CD8-positive, alpha-beta T cell (primary cell): ENCODE measurements at regions of chr16 and their contacts with region 1.

Region 1: DNA sequence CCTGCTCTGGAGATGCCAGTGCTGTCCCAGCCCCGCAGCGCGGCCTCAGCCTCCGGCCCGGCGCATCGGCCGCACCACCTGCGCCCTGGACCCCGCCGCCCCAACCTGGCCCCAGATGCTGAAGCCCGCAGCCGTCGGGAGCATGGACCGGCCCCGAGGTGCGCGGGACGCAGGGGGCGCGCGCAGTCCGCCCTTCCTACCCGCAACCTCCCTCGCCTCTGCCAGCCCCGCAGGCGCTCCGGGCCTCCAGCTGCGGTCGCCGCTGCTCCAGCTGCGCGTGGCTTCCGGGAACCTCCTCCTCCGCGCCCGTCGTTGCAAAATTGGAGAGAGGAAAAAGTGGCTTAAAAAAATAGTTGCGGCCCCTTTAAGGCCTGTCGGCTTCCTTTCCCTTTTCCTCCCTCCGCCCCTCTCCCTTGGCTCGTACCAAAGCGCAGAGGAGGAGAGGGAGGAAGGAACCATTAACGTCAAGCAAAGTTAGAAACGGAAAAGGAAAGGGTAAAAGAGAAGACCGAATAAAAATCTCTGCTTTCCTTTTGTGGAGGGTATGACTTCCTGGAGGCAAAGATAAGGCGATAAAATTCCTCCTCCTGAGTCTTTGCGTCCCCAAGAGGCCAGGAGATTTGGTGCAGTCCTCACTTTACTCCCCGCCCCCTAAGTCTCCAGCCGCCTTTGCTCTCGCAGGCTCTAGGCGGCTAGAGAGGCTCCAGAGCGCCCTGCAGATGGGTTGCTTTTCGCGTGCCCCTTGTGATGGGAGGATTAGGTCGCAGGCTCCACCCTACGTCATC is at the start of gene CDIPT:
- DNase-seq: peak; percentile 87 to 98 (median 93)
- ATAC-seq: peak; percentile 97
- H3K4me3 ChIP-seq: peak within 1 kb of the TSS; percentile 81 to 96
- H3K4me3 Mint-ChIP-seq: peak within 1 kb of the TSS; percentile 94
- H3K27ac ChIP-seq: peak within 1 kb of the TSS; percentile 90 to 99
- H3K27ac Mint-ChIP-seq: peak within 1 kb of the TSS; percentile 100
- H3K4me1 ChIP-seq: peaks cover 19% of the 10 kb centered on the region
- H3K4me1 Mint-ChIP-seq: peaks cover 28% of the 10 kb centered on the region
- H3K27me3 ChIP-seq: no peaks in the 10 kb centered on the region
- H3K27me3 Mint-ChIP-seq: no peaks in the 10 kb centered on the region
- CTCF ChIP-seq: peak; percentile 42
- total RNA-seq, gene CDIPT: 24.5 to 26.4 TPM

Region 2: GRCh38 chr16:29790183-29790952 is 72.7 kb before region 1 on chr16 and contains the start of gene KIF22:
- CTCF ChIA-PET with region 1: interaction called, 3 read pairs
- POLR2A ChIA-PET with region 1: no interaction called
- intact Hi-C with region 1: loop called (anchors 1 kb)
- DNase-seq: peak; percentile 99 to 100 (median 100)
- ATAC-seq: peak; percentile 95
- H3K4me3 ChIP-seq: peak within 1 kb of the TSS; percentile 81 to 94
- H3K4me3 Mint-ChIP-seq: peak within 1 kb of the TSS; percentile 99
- H3K27ac ChIP-seq: peak within 1 kb of the TSS; percentile 78 to 80
- H3K27ac Mint-ChIP-seq: peak within 1 kb of the TSS; percentile 95
- H3K4me1 ChIP-seq: peaks cover 30% of the 10 kb centered on the region
- H3K4me1 Mint-ChIP-seq: peaks cover 41% of the 10 kb centered on the region
- H3K27me3 ChIP-seq: no peaks in the 10 kb centered on the region
- H3K27me3 Mint-ChIP-seq: no peaks in the 10 kb centered on the region
- CTCF ChIP-seq: peak; percentile 67
- total RNA-seq, gene KIF22: 93.5 to 105 TPM

Region 3: GRCh38 chr16:29815793-29816693 is 47.0 kb before region 1 on chr16 and contains the start of gene PAGR1:
- CTCF ChIA-PET with region 1: interaction called, 3 read pairs
- POLR2A ChIA-PET with region 1: interaction called, 5 read pairs
- intact Hi-C with region 1: loop called (anchors 1 kb)
- DNase-seq: peak; percentile 97 to 100 (median 98)
- ATAC-seq: peak; percentile 77
- H3K4me3 ChIP-seq: peak within 1 kb of the TSS; percentile 74 to 90
- H3K4me3 Mint-ChIP-seq: peak within 1 kb of the TSS; percentile 98
- H3K27ac ChIP-seq: peak within 1 kb of the TSS; percentile 80 to 86
- H3K27ac Mint-ChIP-seq: peak within 1 kb of the TSS; percentile 98
- H3K4me1 ChIP-seq: peaks cover 59% of the 10 kb centered on the region
- H3K4me1 Mint-ChIP-seq: peaks cover 62% of the 10 kb centered on the region
- H3K27me3 ChIP-seq: no peaks in the 10 kb centered on the region
- H3K27me3 Mint-ChIP-seq: no peaks in the 10 kb centered on the region
- CTCF ChIP-seq: peak; percentile 92
- total RNA-seq, gene PAGR1: 13.8 to 16.8 TPM

Region 4: GRCh38 chr16:29900102-29900887 is 37.2 kb after region 1 on chr16 and contains the start of gene ASPHD1:
- CTCF ChIA-PET with region 1: no interaction called
- POLR2A ChIA-PET with region 1: no interaction called
- intact Hi-C with region 1: loop called in 1 of 2 experiments (anchors 1 kb)
- DNase-seq: peak in 5 of 9 experiments; percentile 68 to 85 (median 80)
- ATAC-seq: peak; percentile 87
- H3K4me3 ChIP-seq: peak within 1 kb of the TSS; percentile 40 to 58
- H3K4me3 Mint-ChIP-seq: peak within 1 kb of the TSS; percentile 73
- H3K27ac ChIP-seq: no peak within 1 kb of the TSS
- H3K27ac Mint-ChIP-seq: no peak within 1 kb of the TSS
- H3K4me1 ChIP-seq: peaks cover 13% of the 10 kb centered on the region
- H3K4me1 Mint-ChIP-seq: peaks cover 8% of the 10 kb centered on the region
- H3K27me3 ChIP-seq: peaks cover 8 to 36% of the 10 kb centered on the region in 2 experiments
- H3K27me3 Mint-ChIP-seq: peaks cover 23% of the 10 kb centered on the region
- CTCF ChIP-seq: no peak
- total RNA-seq, gene ASPHD1: not detected

Region 5: DNA sequence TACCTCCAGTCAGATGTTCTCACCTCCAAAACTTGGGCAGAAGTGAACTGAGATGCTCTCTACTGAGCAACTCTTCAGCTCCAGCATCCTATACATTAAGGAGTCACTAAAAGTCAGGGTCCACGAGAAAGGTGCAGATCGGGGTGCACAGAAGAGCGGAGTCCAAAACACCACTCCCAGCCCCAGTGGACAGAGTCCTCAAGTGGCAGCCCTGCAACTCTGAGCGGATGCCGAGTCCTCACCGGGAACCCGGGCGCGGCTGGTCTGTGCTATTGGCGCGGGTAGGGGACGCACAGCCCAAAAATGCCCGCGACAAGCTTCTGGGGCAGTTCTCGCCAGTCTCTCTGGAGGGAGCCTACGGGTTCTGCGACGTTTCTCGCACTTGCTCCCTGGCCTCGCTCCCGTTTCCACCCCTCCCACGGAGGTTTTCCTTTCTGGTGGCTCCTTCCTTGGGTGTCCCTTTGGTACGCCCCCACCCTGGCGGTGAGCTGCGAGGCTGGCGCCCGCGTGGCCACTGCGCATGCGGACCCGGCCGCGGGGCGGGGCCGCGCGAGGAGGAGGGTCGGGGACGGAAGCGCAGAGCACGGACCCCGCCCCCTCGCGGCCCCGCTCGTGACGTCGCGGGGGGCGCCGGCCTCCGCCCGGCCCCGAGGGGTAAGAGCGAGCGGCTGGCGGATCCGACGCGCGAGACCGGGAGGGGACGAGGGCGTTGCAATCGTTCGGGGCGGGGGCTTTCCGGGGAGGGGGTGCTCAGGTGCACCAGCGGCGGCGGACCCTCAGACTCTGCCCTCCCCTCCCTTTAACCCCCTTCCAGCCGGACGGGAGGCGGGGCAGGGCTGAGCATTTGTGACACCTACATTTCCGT is 98.6 kb after region 1 on chr16 and contains the start of gene TMEM219:
- CTCF ChIA-PET with region 1: no interaction called
- POLR2A ChIA-PET with region 1: no interaction called
- intact Hi-C with region 1: loop called in 1 of 2 experiments (anchors 1 kb)
- DNase-seq: peak; percentile 87 to 98 (median 95)
- ATAC-seq: peak; percentile 90
- H3K4me3 ChIP-seq: peak within 1 kb of the TSS; percentile 77 to 90
- H3K4me3 Mint-ChIP-seq: peak within 1 kb of the TSS; percentile 89
- H3K27ac ChIP-seq: peak within 1 kb of the TSS; percentile 75 to 88
- H3K27ac Mint-ChIP-seq: peak within 1 kb of the TSS; percentile 95
- H3K4me1 ChIP-seq: peaks cover 19% of the 10 kb centered on the region
- H3K4me1 Mint-ChIP-seq: peaks cover 26% of the 10 kb centered on the region
- H3K27me3 ChIP-seq: no peaks in the 10 kb centered on the region
- H3K27me3 Mint-ChIP-seq: no peaks in the 10 kb centered on the region
- CTCF ChIP-seq: no peak
- total RNA-seq, gene TMEM219: 41.5 to 50.2 TPM

Region 6: GRCh38 chr16:29995911-29996772 is 133.1 kb after region 1 on chr16 and contains the start of gene INO80E:
- CTCF ChIA-PET with region 1: no interaction called
- POLR2A ChIA-PET with region 1: no interaction called
- intact Hi-C with region 1: loop called (anchors 1 kb)
- DNase-seq: peak; percentile 98 to 100 (median 99)
- ATAC-seq: peak; percentile 96
- H3K4me3 ChIP-seq: peak within 1 kb of the TSS; percentile 93 to 100
- H3K4me3 Mint-ChIP-seq: peak within 1 kb of the TSS; percentile 94
- H3K27ac ChIP-seq: peak within 1 kb of the TSS; percentile 99
- H3K27ac Mint-ChIP-seq: peak within 1 kb of the TSS; percentile 97
- H3K4me1 ChIP-seq: peaks cover 14% of the 10 kb centered on the region
- H3K4me1 Mint-ChIP-seq: peaks cover 39% of the 10 kb centered on the region
- H3K27me3 ChIP-seq: no peaks in the 10 kb centered on the region
- H3K27me3 Mint-ChIP-seq: no peaks in the 10 kb centered on the region
- CTCF ChIP-seq: no peak
- total RNA-seq, gene INO80E: 49.8 to 59.4 TPM

Region 7: GRCh38 chr16:30355144-30355894 is 492.2 kb after region 1 on chr16 and contains the start of gene CD2BP2:
- CTCF ChIA-PET with region 1: no interaction called
- POLR2A ChIA-PET with region 1: no interaction called
- intact Hi-C with region 1: loop called in 1 of 2 experiments (anchors 1 kb)
- DNase-seq: peak; percentile 72 to 97 (median 86)
- ATAC-seq: peak; percentile 88
- H3K4me3 ChIP-seq: peak within 1 kb of the TSS; percentile 70 to 98
- H3K4me3 Mint-ChIP-seq: peak within 1 kb of the TSS; percentile 94
- H3K27ac ChIP-seq: peak within 1 kb of the TSS; percentile 63 to 98
- H3K27ac Mint-ChIP-seq: peak within 1 kb of the TSS; percentile 98
- H3K4me1 ChIP-seq: peaks cover 32% of the 10 kb centered on the region
- H3K4me1 Mint-ChIP-seq: peaks cover 27% of the 10 kb centered on the region
- H3K27me3 ChIP-seq: no peaks in the 10 kb centered on the region
- H3K27me3 Mint-ChIP-seq: no peaks in the 10 kb centered on the region
- CTCF ChIP-seq: no peak
- total RNA-seq, gene CD2BP2: 35.4 to 35.9 TPM